A549 (cell line): ENCODE measurements at regions of chr17 and their contacts with region 1.

Region 1: GRCh38 chr17:79844869-79845600 is 5.8 kb upstream of the CBX4 start:
- DNase-seq: peak; percentile 58 to 92
- ATAC-seq: peak; percentile 66 to 83
- H3K4me3 ChIP-seq: peak overlapping the region; percentile 53
- H3K27ac ChIP-seq: peak overlapping the region; percentile 94 to 98
- H3K4me1 ChIP-seq: peaks cover 46% of the 10 kb centered on the region
- CTCF ChIP-seq: peak; percentile 81
- EP300 ChIP-seq: no peak
- POLR2A ChIP-seq: no peak
- RAD21 ChIP-seq: peak; percentile 49 to 68

Region 2: GRCh38 chr17:79707931-79708891 is 136.8 kb before region 1 on chr17:
- CTCF ChIA-PET with region 1: no interaction called
- POLR2A ChIA-PET with region 1: no interaction called
- DNase-seq: peak; percentile 66 to 71
- ATAC-seq: peak; percentile 58 to 80
- H3K4me3 ChIP-seq: no peak overlapping the region
- H3K27ac ChIP-seq: peak overlapping the region; percentile 63 to 77; a peak in 5 of 6 replicates
- H3K4me1 ChIP-seq: peaks cover 17% of the 10 kb centered on the region
- CTCF ChIP-seq: peak; percentile 96
- EP300 ChIP-seq: no peak
- POLR2A ChIP-seq: no peak
- RAD21 ChIP-seq: peak; percentile 96 to 97

Region 3: DNA sequence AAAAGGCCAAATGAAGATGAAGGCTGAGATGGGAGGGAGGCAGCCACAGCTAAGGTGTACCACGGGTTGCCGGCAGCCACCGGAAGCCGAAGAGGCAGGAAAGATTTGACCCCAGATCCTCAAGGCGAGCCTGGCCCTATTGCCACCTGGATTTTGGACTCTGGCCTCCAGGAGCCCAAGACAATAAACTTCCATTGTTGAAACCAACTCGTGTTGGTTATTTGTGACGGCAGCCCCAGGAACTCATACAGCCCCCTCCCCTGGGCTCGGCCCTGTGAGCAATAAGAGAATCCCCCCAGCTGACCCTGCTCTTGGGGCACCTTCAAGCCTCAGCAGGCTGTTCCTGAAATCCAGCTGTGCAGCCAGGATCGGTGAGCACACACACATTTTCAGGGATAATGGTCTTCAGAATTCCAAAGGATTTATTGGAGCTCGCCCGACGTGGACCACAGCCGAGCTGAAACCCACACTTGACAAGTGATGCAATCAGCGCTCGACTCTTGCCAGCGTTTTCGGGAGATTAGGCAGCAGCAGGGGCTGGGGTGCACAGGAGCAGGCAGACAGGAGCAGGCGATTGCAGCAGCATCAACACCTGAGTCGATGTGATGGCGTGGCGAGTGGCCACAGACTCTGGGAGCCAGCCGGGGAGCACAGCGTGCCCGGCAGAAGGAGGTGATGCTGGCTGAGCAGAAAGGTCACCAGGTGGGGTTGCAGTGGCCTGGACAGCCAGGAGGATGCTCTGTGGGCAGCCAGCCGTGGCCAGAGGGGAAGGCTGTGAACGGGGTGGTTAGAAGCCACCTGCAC is 16.6 kb after region 1 on chr17:
- CTCF ChIA-PET with region 1: interaction called, 66 read pairs
- POLR2A ChIA-PET with region 1: interaction called, 4 read pairs
- DNase-seq: no peak
- ATAC-seq: peak in 1 of 2 experiments; percentile 13; a peak in 1 of 6 replicates
- H3K4me3 ChIP-seq: no peak overlapping the region
- H3K27ac ChIP-seq: no peak overlapping the region
- H3K4me1 ChIP-seq: no peaks in the 10 kb centered on the region
- CTCF ChIP-seq: no peak
- EP300 ChIP-seq: no peak
- POLR2A ChIP-seq: no peak
- RAD21 ChIP-seq: no peak

Region 4: GRCh38 chr17:79874329-79874981 is 29.4 kb after region 1 on chr17:
- CTCF ChIA-PET with region 1: interaction called, 20 read pairs
- POLR2A ChIA-PET with region 1: interaction called, 4 read pairs
- DNase-seq: peak; percentile 72 to 95
- ATAC-seq: peak; percentile 81 to 91
- H3K4me3 ChIP-seq: no peak overlapping the region
- H3K27ac ChIP-seq: no peak overlapping the region
- H3K4me1 ChIP-seq: no peaks in the 10 kb centered on the region
- CTCF ChIP-seq: peak; percentile 55
- EP300 ChIP-seq: no peak
- POLR2A ChIP-seq: no peak
- RAD21 ChIP-seq: peak in 1 of 2 experiments; percentile 19; a peak in 1 of 5 replicates

Region 5: DNA sequence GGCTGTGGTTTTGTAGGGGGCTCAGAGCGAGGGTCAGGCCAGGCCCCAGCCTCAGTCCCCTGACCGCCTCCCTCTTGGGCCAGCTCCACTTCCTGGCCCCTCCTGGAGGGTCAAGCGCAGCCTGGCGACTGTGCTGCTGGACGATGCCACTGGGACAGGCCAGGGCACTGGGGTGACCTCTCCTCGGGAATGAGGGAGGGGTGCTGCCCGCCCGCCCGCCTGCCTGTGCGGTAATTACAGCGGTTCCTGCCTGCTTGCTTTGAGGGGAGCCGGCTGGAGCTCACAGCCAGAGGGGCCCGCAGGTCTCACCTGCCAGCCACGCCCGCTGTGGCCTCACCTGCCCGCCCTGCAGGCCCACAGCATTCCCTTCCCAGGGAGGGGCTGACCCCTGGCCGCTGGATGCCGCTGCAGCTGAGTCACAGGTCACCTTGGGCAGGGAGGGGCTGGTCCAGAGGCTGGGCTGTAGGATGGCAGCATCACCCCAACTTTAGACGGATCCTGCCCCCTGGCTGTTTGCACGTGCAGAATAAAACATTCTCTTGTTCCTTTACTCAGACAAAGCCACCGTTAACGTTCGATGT is 70.9 kb after region 1 on chr17:
- CTCF ChIA-PET with region 1: interaction called, 44 read pairs
- POLR2A ChIA-PET with region 1: interaction called, 28 read pairs
- DNase-seq: peak; percentile 77 to 82
- ATAC-seq: peak; percentile 48 to 52; a peak in 5 of 6 replicates
- H3K4me3 ChIP-seq: no peak overlapping the region
- H3K27ac ChIP-seq: peak overlapping the region; percentile 45 to 75; a peak in 5 of 6 replicates
- H3K4me1 ChIP-seq: peaks cover 35% of the 10 kb centered on the region
- CTCF ChIP-seq: peak; percentile 56
- EP300 ChIP-seq: no peak
- POLR2A ChIP-seq: no peak
- RAD21 ChIP-seq: peak; percentile 81 to 86

Region 6: DNA sequence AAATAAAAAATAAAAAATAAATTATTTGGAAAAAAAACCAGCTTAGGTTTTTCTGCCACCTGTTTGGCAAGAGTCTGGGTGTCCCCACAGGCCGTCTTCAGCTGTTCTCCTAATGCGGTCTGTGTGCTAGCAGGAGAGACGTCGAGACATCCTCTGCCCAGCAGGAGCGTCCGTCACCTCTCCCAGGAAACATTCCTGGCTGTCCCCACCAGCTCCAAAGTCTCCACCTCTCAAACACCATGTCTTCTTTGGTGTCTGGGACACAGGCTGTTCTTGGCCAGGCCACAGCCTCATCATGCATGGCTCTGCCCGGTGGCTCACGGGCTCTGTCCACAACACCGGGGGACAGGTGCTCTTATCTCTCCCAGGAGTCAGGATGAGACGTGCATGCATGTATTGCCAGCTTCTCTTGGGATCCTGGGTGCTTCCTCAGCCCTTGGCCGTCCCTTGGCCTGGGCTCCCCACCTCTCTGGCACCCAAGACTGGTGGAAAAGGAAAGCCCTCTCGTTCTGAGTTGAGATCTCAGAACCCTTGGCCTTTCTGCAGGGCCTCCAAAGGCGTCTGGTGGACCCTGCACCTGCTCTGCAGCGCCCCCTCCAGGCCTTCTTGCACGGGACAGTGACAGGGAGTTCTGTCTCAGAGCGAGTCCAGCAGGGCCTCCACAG is 79.1 kb after region 1 on chr17:
- CTCF ChIA-PET with region 1: interaction called, 27 read pairs
- POLR2A ChIA-PET with region 1: interaction called, 6 read pairs
- DNase-seq: peak in 1 of 2 experiments; percentile 77
- ATAC-seq: peak; percentile 38 to 83; a peak in 4 of 6 replicates
- H3K4me3 ChIP-seq: no peak overlapping the region
- H3K27ac ChIP-seq: peak overlapping the region; percentile 25 to 77; a peak in 5 of 6 replicates
- H3K4me1 ChIP-seq: peaks cover 28% of the 10 kb centered on the region
- CTCF ChIP-seq: peak; percentile 46; the same call in 2 of the 3 replicates
- EP300 ChIP-seq: no peak
- POLR2A ChIP-seq: no peak
- RAD21 ChIP-seq: peak; percentile 30 to 53; a peak in 2 of 5 replicates

Region 7: DNA sequence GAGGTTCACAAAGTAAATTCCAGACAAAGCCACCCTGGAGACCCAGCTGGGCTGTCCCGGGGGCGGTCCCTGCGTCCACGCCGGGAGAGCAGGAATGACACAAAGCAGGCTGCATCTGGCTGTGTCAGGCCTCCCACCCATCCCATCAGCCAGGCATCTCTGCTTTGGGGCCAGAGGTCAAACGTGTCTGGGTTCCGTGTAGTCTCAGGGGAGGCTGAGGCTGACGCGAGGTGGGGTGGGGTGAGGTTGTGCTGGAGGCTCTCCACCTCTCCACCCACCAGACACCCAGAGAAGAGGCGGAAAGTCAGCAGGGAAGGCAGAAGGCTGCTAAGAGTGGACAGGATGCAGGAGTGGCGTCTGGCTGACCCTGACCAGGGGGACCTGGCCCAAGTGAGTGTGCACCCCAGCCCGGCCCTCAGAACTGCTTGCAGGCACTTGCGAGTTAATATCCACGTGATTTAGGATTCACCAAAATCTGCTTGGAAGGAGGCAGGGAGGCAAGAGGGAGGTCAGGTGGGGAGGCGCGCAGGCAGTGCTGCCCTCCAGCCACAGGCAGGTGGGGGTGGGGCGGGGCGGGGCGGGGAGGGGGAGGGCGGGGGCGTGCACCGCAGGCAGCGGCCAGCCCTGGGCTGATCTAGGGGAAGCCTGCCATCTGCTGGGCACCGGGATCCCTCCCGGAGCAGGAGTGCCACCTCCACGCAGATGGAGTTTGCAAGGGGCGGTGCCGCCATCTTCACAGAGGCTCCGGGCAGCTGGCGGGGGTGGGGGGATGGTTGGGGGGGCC is 146.3 kb after region 1 on chr17:
- CTCF ChIA-PET with region 1: interaction called, 47 read pairs
- POLR2A ChIA-PET with region 1: interaction called, 38 read pairs
- DNase-seq: peak; percentile 88 to 97
- ATAC-seq: peak; percentile 69 to 90
- H3K4me3 ChIP-seq: peak overlapping the region; percentile 51
- H3K27ac ChIP-seq: peak overlapping the region; percentile 89 to 95
- H3K4me1 ChIP-seq: peaks cover 83% of the 10 kb centered on the region
- CTCF ChIP-seq: peak; percentile 88
- EP300 ChIP-seq: no peak; a peak in 1 of 5 replicates
- POLR2A ChIP-seq: no peak
- RAD21 ChIP-seq: peak; percentile 86 to 99